ENCODE measurements at regions of chr2 and their contacts with region 1.

Region 1: GRCh38 chr2:75896779-75897366 is 186.2 kb upstream of the GCFC2 start:
- DNase-seq: peak; percentile 61
- ATAC-seq: peak; percentile 100
- H3K4me3 Mint-ChIP-seq: no peak overlapping the region
- H3K27ac Mint-ChIP-seq: no peak overlapping the region
- H3K4me1 Mint-ChIP-seq: peaks cover 3% of the 10 kb centered on the region
- H3K27me3 Mint-ChIP-seq: no peaks in the 10 kb centered on the region; the same call in 1 of the 2 replicates
- CTCF ChIP-seq: peak; percentile 34; the same call in 1 of the 2 replicates

Region 2: GRCh38 chr2:75807992-75808391 is 88.9 kb before region 1 on chr2:
- CTCF ChIA-PET with region 1: no interaction called
- POLR2A ChIA-PET with region 1: no interaction called
- DNase-seq: no peak
- ATAC-seq: no peak
- H3K4me3 Mint-ChIP-seq: no peak overlapping the region
- H3K27ac Mint-ChIP-seq: no peak overlapping the region
- H3K4me1 Mint-ChIP-seq: no peaks in the 10 kb centered on the region
- H3K27me3 Mint-ChIP-seq: no peaks in the 10 kb centered on the region
- CTCF ChIP-seq: no peak

Region 3: DNA sequence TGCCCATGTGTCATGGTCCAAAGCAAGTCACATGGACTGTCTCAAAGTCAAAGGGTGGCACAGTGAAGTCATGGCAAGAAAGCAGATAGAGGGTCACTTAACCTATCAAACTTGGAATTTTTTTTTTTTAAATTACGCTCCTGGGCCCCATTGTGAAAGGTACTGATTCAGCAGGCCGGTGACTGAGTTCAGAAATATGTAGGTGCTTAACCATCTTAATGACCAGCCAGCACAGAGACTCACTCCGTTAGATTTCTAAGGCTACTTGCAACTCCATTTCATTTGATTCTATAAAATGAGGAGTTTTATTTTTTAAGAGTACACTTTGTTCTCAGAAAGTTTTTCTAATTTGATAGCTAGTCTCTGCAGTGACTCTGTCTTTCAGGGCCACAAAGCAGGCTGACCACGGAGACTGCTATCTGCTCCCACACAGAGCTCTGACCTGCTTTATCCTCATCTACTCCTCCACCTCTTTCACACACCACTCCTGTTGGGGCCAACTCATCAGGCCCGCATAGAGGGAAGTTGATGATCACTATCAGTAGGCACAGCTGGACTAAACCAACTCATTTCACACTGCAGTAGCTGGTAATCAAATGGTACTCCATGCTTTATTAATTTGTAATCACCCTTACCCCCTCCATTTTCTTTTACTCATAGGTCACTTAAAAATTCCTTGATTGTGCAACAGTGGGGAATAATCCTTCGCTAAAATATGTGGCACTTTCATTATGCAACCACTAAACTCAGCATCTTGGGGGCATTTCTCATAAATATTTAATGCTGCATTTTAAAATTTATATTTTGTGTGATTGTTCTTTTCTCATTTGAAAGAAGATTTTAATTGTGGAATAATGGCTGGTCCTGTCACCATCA is 63.5 kb after region 1 on chr2:
- CTCF ChIA-PET with region 1: interaction called, 11 read pairs
- POLR2A ChIA-PET with region 1: no interaction called
- DNase-seq: no peak
- ATAC-seq: peak; percentile 55; the same call in 1 of the 2 replicates
- H3K4me3 Mint-ChIP-seq: no peak overlapping the region
- H3K27ac Mint-ChIP-seq: no peak overlapping the region
- H3K4me1 Mint-ChIP-seq: peaks cover 34% of the 10 kb centered on the region
- H3K27me3 Mint-ChIP-seq: no peaks in the 10 kb centered on the region
- CTCF ChIP-seq: no peak

Measured in WTC11 (cell line).